K562 (cell line): ENCODE measurements at regions of chr11 and their contacts with region 1.

Region 1: GRCh38 chr11:62905927-62906531 is 15.1 kb downstream of the CHRM1 start:
- DNase-seq: peak; percentile 87 to 90 (median 90)
- ATAC-seq: peak; percentile 92
- H3K4me3 ChIP-seq: no peak overlapping the region
- H3K27ac ChIP-seq: no peak overlapping the region
- H3K4me1 ChIP-seq: peaks cover 6 to 18% of the 10 kb centered on the region in 2 experiments; a peak in 4 of 5 replicates
- H3K27me3 ChIP-seq: peaks cover 7 to 41% of the 10 kb centered on the region in 2 experiments; a peak in 3 of 5 replicates
- CTCF ChIP-seq: peak; percentile 99
- EP300 ChIP-seq: peak; percentile 46; the same call in 1 of the 2 replicates
- POLR2A ChIP-seq: no peak
- RAD21 ChIP-seq: peak; percentile 93 to 97

Region 2: DNA sequence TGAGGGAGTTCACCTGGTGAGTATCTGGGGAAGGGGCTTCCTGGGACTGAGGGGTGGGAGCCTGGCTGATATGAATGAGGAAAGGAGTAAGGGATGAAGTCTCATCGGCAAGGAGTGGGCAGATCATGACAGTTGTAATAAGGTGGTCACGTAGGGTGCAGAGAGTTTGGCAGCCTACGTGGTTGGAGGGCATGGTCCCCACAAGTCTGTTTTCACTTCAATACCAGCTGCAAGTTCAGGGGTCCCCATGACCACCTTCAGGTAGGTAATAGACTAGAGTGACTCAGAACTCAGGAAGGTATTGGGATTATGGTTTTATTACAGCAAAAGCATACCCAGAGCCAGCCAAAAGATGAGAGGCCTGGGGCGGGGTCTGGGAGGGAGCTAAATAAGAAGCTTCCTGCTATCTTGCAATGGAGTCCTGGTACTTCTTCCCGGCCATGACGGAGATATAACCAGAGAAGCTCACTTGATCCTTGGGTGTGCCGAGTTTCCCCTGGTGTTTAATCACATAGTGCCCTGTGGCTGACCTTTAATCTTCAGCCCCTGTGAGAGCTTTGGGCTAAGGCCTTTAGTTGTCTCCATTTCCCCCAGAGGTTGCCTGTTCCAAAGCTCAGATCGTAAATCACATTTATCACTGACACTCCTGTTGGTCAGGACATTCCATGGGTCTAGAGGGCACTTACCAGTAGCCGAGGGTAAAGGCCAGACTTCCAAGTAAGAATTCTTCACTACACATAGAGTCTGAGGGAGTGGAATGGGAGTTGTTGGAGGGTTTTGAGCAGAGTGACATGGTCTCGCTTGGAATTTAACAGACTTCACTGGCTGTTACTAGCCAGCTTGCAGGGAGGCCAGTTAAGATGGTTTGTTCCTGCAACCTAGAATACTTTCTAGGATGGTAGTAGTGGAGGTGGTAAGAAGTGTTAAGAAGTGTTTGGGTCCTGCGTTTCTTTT is 16.3 kb before region 1 on chr11:
- CTCF ChIA-PET with region 1: no interaction called
- POLR2A ChIA-PET with region 1: interaction called, 22 read pairs
- in situ Hi-C with region 1: no loop called
- intact Hi-C with region 1: no loop called
- DNase-seq: peak; percentile 36 to 90 (median 59)
- ATAC-seq: peak; percentile 73
- H3K4me3 ChIP-seq: no peak overlapping the region
- H3K27ac ChIP-seq: peak overlapping the region; percentile 30
- H3K4me1 ChIP-seq: peaks cover 53 to 65% of the 10 kb centered on the region in 2 experiments
- H3K27me3 ChIP-seq: no peaks in the 10 kb centered on the region
- CTCF ChIP-seq: peak in 1 of 3 experiments; percentile 5; a peak in 1 of 6 replicates
- EP300 ChIP-seq: peak; percentile 66
- POLR2A ChIP-seq: peak; percentile 89
- RAD21 ChIP-seq: peak in 1 of 2 experiments; percentile 14; a peak in 2 of 4 replicates

Region 3: GRCh38 chr11:62922658-62923431 is 16.8 kb after region 1 on chr11:
- CTCF ChIA-PET with region 1: interaction called, 4 read pairs
- POLR2A ChIA-PET with region 1: interaction called, 5 read pairs
- in situ Hi-C with region 1: no loop called
- intact Hi-C with region 1: loop called (anchors 1 kb)
- DNase-seq: peak; percentile 76 to 87 (median 82)
- ATAC-seq: peak; percentile 89
- H3K4me3 ChIP-seq: no peak overlapping the region
- H3K27ac ChIP-seq: no peak overlapping the region
- H3K4me1 ChIP-seq: peaks cover 19 to 64% of the 10 kb centered on the region in 2 experiments
- H3K27me3 ChIP-seq: peaks cover 17 to 31% of the 10 kb centered on the region in 2 experiments; a peak in 4 of 5 replicates
- CTCF ChIP-seq: peak; percentile 66 to 80 (median 75)
- EP300 ChIP-seq: no peak
- POLR2A ChIP-seq: no peak
- RAD21 ChIP-seq: peak; percentile 38 to 71

Region 4: DNA sequence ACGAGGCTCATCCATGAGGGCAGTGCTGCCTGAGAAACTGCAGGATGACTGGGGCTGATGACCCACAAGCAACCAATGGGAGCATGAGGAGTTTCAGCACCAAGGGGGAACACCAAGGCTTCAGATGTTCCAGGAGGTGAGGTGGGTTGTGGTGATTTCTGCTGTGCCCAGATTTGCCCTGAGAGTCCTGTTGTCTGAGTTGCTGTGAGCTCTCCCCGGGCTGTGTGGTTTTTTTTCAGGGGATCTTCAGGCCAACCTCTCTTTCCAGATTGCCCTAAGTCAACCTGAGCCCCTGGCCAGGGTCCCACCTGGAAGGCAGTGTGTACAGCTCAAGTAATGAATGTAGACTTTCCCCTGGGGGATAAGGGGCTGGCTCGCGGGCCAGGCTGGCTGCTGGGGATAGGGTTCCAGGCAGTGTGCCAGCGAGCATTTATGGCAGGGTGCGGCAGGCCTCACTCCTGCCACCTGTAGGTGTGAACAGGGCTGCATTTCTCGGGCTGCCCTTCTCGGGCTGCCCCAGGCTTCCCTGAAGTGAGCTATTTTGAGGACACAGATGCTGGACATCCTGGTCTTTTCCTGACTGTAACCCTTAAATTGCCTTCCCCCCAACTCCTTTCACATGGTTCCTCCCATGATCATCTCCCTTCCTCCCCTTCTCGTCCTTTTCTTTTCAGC is 69.0 kb after region 1 on chr11:
- CTCF ChIA-PET with region 1: no interaction called
- POLR2A ChIA-PET with region 1: no interaction called
- in situ Hi-C with region 1: no loop called
- intact Hi-C with region 1: loop called (anchors 5 kb)
- DNase-seq: peak; percentile 41 to 54 (median 47)
- ATAC-seq: peak; percentile 92
- H3K4me3 ChIP-seq: no peak overlapping the region
- H3K27ac ChIP-seq: no peak overlapping the region
- H3K4me1 ChIP-seq: peaks cover 0 to 6% of the 10 kb centered on the region in 2 experiments; a peak in 1 of 5 replicates
- H3K27me3 ChIP-seq: peaks cover 5 to 32% of the 10 kb centered on the region in 2 experiments; a peak in 3 of 5 replicates
- CTCF ChIP-seq: peak; percentile 55 to 60 (median 55); a peak in 5 of 6 replicates
- EP300 ChIP-seq: no peak
- POLR2A ChIP-seq: no peak
- RAD21 ChIP-seq: peak; percentile 23 to 26; a peak in 1 of 4 replicates

Region 5: DNA sequence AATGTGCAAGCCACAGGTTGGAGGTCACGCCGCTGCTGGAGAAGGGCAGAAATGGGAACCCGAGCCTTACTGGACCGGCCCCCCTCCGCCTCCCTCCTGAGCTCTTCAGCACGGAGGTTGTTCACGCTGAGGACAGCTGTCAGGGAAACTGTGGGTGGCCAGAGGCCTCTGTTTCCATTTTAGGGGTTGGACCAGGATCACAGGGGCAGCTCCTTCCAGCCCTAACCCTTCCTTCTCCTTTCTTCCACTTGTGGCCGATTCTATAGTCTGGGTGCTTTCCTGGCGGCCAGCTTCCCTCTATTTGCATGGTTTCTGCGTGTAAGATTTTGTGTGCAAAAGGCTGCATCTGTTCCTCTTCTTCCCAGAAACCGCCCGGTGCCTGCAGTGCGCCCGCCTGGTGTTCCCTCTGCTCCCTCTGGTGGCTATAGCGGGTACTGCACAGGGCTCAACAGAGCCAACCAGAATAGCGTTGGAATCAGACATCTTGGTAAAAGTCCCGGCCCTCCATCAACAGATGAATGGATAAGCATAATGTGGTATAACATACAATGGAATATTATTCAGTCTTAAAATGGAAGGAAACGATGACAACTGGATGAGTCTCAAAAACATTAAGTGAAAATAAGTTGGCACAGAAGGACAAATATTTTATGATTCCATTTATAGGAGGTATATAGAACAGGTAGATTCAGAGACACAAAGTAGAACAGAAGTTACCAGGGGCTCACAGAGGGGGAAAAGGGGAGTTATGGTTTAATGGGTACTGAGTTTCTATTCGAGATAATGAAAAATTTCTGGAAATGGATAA is 118.0 kb after region 1 on chr11:
- CTCF ChIA-PET with region 1: interaction called, 60 read pairs
- POLR2A ChIA-PET with region 1: interaction called, 14 read pairs
- in situ Hi-C with region 1: loop called (anchors 5 kb)
- intact Hi-C with region 1: loop called (anchors 1 kb)
- DNase-seq: peak; percentile 80 to 83 (median 82)
- ATAC-seq: peak; percentile 94
- H3K4me3 ChIP-seq: no peak overlapping the region
- H3K27ac ChIP-seq: no peak overlapping the region
- H3K4me1 ChIP-seq: peaks cover 0 to 8% of the 10 kb centered on the region in 2 experiments; a peak in 2 of 5 replicates
- H3K27me3 ChIP-seq: peaks cover 3 to 45% of the 10 kb centered on the region in 2 experiments; a peak in 3 of 5 replicates
- CTCF ChIP-seq: peak; percentile 95 to 99 (median 98)
- EP300 ChIP-seq: no peak
- POLR2A ChIP-seq: no peak
- RAD21 ChIP-seq: peak; percentile 94

Region 6: GRCh38 chr11:63212742-63213141 is 306.7 kb after region 1 on chr11:
- CTCF ChIA-PET with region 1: interaction called, 8 read pairs
- POLR2A ChIA-PET with region 1: no interaction called
- in situ Hi-C with region 1: no loop called
- intact Hi-C with region 1: loop called (anchors 1 kb)
- DNase-seq: peak; percentile 41 to 56 (median 48)
- ATAC-seq: no peak; the same call in 2 of the 3 replicates
- H3K4me3 ChIP-seq: no peak overlapping the region
- H3K27ac ChIP-seq: no peak overlapping the region
- H3K4me1 ChIP-seq: no peaks in the 10 kb centered on the region
- H3K27me3 ChIP-seq: no peaks in the 10 kb centered on the region; a peak in 1 of 5 replicates
- CTCF ChIP-seq: peak; percentile 56 to 69 (median 63); a peak in 5 of 6 replicates
- EP300 ChIP-seq: no peak
- POLR2A ChIP-seq: no peak
- RAD21 ChIP-seq: peak; percentile 72 to 79

Region 7: GRCh38 chr11:63871962-63872799 is 966.2 kb after region 1 on chr11:
- CTCF ChIA-PET with region 1: no interaction called
- POLR2A ChIA-PET with region 1: no interaction called
- in situ Hi-C with region 1: no loop called
- intact Hi-C with region 1: no loop called
- DNase-seq: peak; percentile 85 to 95 (median 90)
- ATAC-seq: peak; percentile 100
- H3K4me3 ChIP-seq: no peak overlapping the region
- H3K27ac ChIP-seq: peak overlapping the region; percentile 64
- H3K4me1 ChIP-seq: peaks cover 35 to 39% of the 10 kb centered on the region in 2 experiments
- H3K27me3 ChIP-seq: no peaks in the 10 kb centered on the region
- CTCF ChIP-seq: peak; percentile 85 to 96 (median 89)
- EP300 ChIP-seq: peak; percentile 55
- POLR2A ChIP-seq: no peak
- RAD21 ChIP-seq: peak; percentile 90 to 92